BJ (cell line): ENCODE measurements at regions of chr1 and their contacts with region 1.

Region 1: GRCh38 chr1:16155532-16156410 is at the start of gene EPHA2:
- DNase-seq: no peak
- H3K4me3 ChIP-seq: peak within 1 kb of the TSS; percentile 80
- H3K27me3 ChIP-seq: no peaks in the 10 kb centered on the region
- CTCF ChIP-seq: no peak
- polyA plus RNA-seq, gene EPHA2: 13.6 and 26.5 TPM in 2 replicates

Region 2: DNA sequence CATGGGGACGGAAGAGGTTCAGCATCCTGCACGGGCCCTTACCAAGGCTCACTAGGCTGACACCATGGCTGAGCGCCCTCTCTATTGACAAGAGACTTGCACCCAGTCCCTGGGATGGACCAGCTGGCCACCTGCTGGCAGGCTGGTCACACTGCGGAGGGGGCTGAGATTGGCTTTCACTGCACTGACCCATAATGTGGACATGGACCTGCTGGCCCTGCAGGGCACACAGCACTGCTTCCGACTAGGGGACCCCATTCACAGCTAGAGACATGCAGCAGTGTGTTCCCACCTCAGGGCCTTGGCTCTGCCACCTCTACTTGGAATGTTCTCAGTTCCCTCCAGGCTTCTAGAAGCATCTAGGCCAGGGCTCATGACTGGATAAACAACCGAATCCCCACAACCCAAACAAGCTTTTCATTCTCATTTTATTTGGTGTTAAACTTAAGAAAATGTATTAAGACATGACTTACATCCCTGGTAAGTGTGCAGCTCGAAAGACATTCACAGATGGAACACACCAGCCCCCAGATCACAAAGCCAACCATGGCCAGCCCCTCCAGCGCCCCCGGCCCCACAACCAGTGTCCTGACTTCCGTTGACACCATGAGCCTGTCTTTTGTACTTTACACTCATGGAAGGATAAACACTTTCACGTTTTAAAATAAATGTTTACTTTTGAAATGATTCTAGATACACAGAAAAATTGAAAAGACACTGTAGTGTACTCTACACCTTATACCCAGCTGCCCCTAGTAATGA is 161.0 kb before region 1 on chr1:
- CTCF ChIA-PET with region 1: no interaction called
- POLR2A ChIA-PET with region 1: no interaction called
- DNase-seq: no peak
- H3K4me3 ChIP-seq: no peak overlapping the region
- H3K27me3 ChIP-seq: peaks cover 3% of the 10 kb centered on the region
- CTCF ChIP-seq: peak; percentile 99

Region 3: GRCh38 chr1:16175610-16176553 is 20.1 kb after region 1 on chr1:
- CTCF ChIA-PET with region 1: interaction called, 4 read pairs
- POLR2A ChIA-PET with region 1: interaction called, 11 read pairs
- DNase-seq: peak; percentile 65
- H3K4me3 ChIP-seq: no peak overlapping the region
- H3K27me3 ChIP-seq: no peaks in the 10 kb centered on the region
- CTCF ChIP-seq: no peak

Region 4: GRCh38 chr1:16181887-16182719 is 26.3 kb after region 1 on chr1:
- CTCF ChIA-PET with region 1: interaction called, 6 read pairs
- POLR2A ChIA-PET with region 1: interaction called, 13 read pairs
- DNase-seq: peak; percentile 65
- H3K4me3 ChIP-seq: no peak overlapping the region
- H3K27me3 ChIP-seq: no peaks in the 10 kb centered on the region
- CTCF ChIP-seq: no peak

Region 5: DNA sequence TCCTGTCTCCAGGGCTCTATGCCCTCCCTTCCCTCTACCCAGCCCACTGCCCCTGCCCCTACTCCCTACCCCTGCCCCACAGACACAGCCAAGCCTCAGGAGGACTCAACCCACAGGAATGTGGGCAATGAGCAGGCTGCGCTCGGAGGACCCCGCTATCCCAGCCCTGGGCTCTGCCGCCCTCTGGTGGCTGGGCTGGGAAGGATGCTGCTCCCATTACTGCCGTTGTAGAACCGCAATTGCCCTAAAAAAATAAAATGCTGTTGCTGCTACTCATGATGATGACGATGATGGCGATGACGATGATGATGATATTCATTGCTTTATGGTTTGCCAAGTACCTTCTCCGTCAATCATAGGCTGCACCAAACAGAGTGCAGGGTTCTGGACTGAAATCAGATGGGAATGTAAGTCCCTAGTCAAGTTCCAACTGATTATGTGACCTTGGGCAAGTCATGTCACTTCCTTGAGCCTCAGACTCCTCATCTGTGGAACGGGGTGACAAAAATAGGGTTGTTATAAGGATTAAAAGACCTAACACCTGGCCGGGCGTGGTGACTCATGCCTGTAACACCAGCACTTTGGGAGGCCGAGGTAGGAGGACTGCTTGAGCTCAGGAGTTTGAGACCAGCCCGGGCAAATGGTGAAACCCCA is 32.1 kb after region 1 on chr1:
- CTCF ChIA-PET with region 1: interaction called, 14 read pairs
- POLR2A ChIA-PET with region 1: no interaction called
- DNase-seq: no peak
- H3K4me3 ChIP-seq: no peak overlapping the region
- H3K27me3 ChIP-seq: no peaks in the 10 kb centered on the region
- CTCF ChIP-seq: peak; percentile 97